IMR-90 (cell line): ENCODE measurements at regions of chr11 and their contacts with region 1.

Region 1: DNA sequence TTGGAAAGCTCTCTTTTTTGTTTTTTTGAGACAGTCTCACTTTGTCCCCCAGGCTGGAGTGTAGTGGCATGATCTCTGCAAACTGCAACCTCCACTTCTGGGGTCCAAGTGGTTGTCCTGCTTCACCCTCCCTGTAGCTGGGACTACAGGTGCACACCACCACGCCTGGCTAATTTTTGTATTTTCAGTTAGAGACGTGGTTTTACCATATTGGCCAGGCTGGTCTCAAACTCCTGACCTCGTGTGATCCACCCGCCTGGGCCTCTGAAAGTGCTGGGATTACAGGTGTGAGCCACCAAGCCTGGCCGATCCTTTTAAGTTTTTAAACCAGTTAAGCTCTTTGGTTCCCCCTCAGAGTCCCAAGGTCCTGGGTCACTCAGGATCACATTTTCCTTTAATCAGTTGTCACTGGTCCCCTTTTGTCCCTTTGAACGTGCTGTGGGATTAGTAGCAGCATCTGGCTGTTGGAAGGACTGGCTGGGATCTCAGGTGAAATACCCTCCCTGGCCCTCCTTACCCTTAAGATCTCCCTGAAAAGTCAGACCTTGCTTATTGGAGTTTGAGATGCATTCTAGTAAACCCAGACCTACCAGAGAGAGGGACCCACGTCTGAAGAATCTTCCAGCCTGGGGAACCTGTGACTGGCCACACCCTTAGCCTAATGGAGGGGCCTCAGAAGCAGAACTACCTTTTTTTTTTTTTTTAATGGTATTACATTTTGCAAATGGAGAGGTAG is 8.1 kb downstream of the MALAT1 start:
- DNase-seq: peak; percentile 95
- ATAC-seq: no peak; the same call in 1 of the 2 replicates
- H3K4me3 ChIP-seq: peak overlapping the region; percentile 72
- H3K27ac ChIP-seq: peak overlapping the region; percentile 16
- H3K4me1 ChIP-seq: no peaks in the 10 kb centered on the region
- H3K27me3 ChIP-seq: no peaks in the 10 kb centered on the region
- CTCF ChIP-seq: no peak
- POLR2A ChIP-seq: no peak
- RAD21 ChIP-seq: no peak

Region 2: GRCh38 chr11:65382033-65382807 is 124.7 kb before region 1 on chr11 and contains the start of gene SLC25A45:
- CTCF ChIA-PET with region 1: no interaction called
- POLR2A ChIA-PET with region 1: interaction called, 4 read pairs
- dilution Hi-C with region 1: no loop called
- in situ Hi-C with region 1: no loop called
- intact Hi-C with region 1: loop called (anchors 1 kb)
- DNase-seq: peak; percentile 99
- ATAC-seq: peak; percentile 84
- H3K4me3 ChIP-seq: peak within 1 kb of the TSS; percentile 21
- H3K27ac ChIP-seq: peak within 1 kb of the TSS; percentile 89
- H3K4me1 ChIP-seq: peaks cover 27% of the 10 kb centered on the region
- H3K27me3 ChIP-seq: no peaks in the 10 kb centered on the region
- CTCF ChIP-seq: peak; percentile 88
- POLR2A ChIP-seq: peak; percentile 52; the same call in 1 of the 2 replicates
- RAD21 ChIP-seq: peak; percentile 86
- total RNA-seq, gene SLC25A45: 0.56 and 0.72 TPM in 2 replicates

Region 3: GRCh38 chr11:65418711-65419459 is 88.1 kb before region 1 on chr11:
- CTCF ChIA-PET with region 1: interaction called, 7 read pairs
- POLR2A ChIA-PET with region 1: interaction called, 142 read pairs
- dilution Hi-C with region 1: no loop called
- in situ Hi-C with region 1: loop called (anchors 5 kb)
- intact Hi-C with region 1: loop called (anchors 1 kb)
- DNase-seq: peak; percentile 91
- ATAC-seq: peak; percentile 35
- H3K4me3 ChIP-seq: peak overlapping the region; percentile 16; the same call in 1 of the 2 replicates
- H3K27ac ChIP-seq: peak overlapping the region; percentile 98
- H3K4me1 ChIP-seq: peaks cover 38% of the 10 kb centered on the region
- H3K27me3 ChIP-seq: no peaks in the 10 kb centered on the region
- CTCF ChIP-seq: no peak
- POLR2A ChIP-seq: peak; percentile 81
- RAD21 ChIP-seq: no peak

Region 4: DNA sequence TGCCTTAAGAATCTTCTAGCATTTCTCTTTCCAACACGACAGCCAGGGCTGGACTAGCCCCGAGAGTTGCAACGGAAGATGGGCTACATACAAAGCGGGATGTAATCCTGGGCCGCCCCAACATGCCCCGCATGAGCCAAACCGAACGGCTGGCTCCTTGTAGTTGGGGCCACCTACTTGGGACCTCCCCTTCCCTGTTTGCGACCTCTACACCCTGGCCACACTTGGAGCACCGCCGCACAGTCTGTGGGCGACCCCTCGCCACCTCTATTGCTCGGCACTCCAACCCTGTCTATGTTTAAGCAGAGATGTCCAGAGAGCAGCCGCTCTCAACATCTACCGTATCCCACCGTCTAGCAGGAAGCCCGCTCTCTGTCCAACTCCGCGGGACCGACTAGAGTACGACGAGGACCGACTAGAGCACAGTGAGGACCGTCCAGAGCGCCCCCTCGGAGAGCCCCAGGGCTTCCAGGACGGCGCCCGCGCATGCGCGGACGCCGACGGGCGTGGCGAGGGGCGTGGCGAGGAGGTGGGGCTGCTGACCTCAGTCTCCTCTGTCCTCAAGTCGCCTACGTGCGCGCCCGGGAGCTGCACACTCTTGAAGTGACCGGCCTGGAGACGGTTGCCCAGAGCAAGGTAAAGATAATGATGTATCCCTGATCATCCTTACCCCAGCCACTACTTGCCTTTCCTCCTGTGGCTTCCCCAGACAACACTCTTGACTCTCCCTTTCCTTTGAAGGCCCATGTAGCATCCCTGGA is 52.1 kb before region 1 on chr11:
- CTCF ChIA-PET with region 1: no interaction called
- POLR2A ChIA-PET with region 1: interaction called, 6 read pairs
- dilution Hi-C with region 1: no loop called
- in situ Hi-C with region 1: no loop called
- intact Hi-C with region 1: loop called (anchors 2 kb)
- DNase-seq: peak; percentile 74
- ATAC-seq: peak; percentile 94
- H3K4me3 ChIP-seq: peak overlapping the region; percentile 61
- H3K27ac ChIP-seq: peak overlapping the region; percentile 83
- H3K4me1 ChIP-seq: peaks cover 10% of the 10 kb centered on the region; the same call in 1 of the 2 replicates
- H3K27me3 ChIP-seq: no peaks in the 10 kb centered on the region
- CTCF ChIP-seq: peak; percentile 14; the same call in 1 of the 2 replicates
- POLR2A ChIP-seq: peak; percentile 86
- RAD21 ChIP-seq: no peak